Gastrocnemius medialis (tissue), 4 donors: ENCODE measurements at regions of chr1 and their contacts with region 1.

Region 1: DNA sequence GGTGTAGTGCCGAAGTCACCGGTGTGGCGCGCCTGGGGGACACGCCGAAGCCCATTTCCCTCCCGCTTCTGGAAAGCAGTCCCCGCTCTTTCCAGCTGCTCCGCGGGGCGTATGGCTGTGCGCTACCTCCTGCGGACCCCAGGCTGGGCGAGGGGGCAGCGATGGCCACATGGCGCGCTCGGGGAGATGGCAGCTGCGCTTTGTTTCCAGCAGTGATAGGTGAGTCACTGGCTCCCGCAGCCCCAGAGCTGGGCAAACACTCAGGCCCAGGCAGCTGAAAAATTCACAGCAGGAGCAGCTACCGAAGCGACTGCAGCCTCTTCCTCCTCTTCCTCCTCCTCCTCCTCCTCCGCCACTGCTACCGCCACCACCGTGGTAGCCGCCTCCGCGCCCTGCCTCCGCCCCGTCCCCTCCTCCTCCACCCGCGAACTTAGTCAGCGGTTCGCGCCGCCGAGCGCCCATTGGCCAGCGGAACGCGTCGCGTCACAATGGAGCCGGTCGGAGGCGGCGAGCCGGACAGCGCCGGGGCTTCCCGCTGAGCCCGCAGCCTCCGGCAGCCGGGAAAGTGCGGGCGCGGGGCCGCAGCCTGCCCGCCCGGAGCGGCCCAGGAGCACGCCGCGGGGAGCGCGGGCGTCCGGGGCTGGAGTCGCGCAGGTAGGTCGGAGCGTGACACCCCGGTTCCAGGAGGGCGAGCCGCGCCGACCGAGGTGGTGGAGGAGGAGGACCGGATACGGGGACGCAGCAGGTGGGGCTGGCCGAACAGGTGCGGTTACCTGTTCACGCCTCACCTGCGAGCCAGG is at the start of gene LRRC8B:
- DNase-seq: peak; percentile 87 to 88
- ATAC-seq: peak; percentile 88 to 91
- H3K4me3 ChIP-seq: peak within 1 kb of the TSS; percentile 82 to 99 (median 88)
- H3K27ac ChIP-seq: peak within 1 kb of the TSS; percentile 89 to 98 (median 94)
- H3K4me1 ChIP-seq: peaks cover 36 to 40% of the 10 kb centered on the region in 2 donors
- H3K27me3 ChIP-seq: no peaks in the 10 kb centered on the region
- CTCF ChIP-seq: no peak
- POLR2A ChIP-seq: peak; percentile 90 to 94
- total RNA-seq, gene LRRC8B: 3.5 to 15.7 (median 8.5) TPM

Region 2: DNA sequence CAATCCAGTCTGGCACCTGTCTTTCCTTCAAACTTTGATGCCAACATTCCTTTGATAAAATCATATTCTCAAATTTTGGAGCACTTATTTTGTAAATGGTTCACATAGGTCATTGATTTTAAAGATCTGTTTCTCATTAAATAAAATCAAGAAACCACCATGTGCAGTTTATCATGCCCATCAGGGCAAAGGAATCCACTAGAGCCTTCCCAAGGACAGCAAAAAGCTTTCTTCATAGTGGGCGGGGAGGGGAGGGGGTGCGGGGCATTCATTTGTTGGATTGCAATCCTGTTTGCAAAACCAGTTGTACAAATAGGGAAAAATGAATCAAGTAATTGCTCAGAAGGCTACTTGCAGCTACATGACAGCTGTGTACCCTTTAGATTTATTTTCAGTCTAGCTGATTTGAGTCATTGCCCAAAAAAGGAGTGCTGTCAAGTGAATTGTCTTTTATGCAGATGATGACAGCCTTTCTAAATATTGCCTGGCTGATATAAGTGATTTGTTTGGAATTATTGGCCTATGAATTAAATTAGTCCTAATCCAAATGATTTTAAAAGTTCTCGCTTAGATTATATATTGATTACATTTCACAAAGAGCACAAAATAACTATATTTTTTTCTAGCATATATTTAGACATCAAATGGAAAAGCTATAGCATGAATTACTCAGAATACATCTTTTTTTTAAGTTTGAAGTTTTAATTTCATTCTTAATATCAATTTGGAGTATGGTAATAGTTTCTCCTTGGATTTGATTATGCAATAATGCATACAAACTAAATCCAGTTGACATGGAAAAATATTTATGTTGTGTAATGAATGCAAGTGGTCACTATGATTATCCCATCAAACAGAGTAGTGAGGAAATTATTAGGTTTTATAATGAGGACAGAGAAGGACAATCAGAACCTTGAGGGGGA is 23.3 kb after region 1 on chr1:
- in situ Hi-C with region 1: no loop called
- intact Hi-C with region 1: loop called (anchors 2 kb)
- DNase-seq: peak; percentile 15 to 64
- ATAC-seq: peak; percentile 69 to 87
- H3K4me3 ChIP-seq: no peak overlapping the region
- H3K27ac ChIP-seq: peak overlapping the region; percentile 13 to 77 (median 70)
- H3K4me1 ChIP-seq: peaks cover 58% of the 10 kb centered on the region in 2 donors
- H3K27me3 ChIP-seq: no peaks in the 10 kb centered on the region
- CTCF ChIP-seq: no peak
- POLR2A ChIP-seq: no peak

Region 3: DNA sequence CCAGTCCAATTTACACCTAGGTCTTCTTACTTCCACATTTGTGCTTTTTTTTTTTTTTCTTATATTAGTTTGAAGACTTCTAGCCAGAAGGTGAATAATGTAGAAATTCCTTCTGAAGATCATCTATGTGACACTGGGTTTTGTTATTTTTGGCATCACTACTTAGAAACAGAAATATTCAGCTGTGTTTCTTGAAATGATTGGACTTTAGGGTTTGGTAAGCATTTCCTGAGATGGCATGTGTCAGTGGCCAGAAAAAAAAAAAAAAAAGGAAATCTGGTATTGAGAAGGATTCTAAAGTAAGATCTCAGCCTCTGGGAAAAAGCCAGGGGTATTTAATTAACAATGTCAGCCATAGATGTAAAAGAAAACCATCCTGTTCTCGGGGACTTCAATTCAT is 64.9 kb after region 1 on chr1:
- in situ Hi-C with region 1: loop called in 1 of 4 experiments (anchors 10 kb)
- intact Hi-C with region 1: no loop called
- DNase-seq: no peak
- ATAC-seq: no peak
- H3K4me3 ChIP-seq: no peak overlapping the region
- H3K27ac ChIP-seq: no peak overlapping the region
- H3K4me1 ChIP-seq: peaks cover 0 to 2% of the 10 kb centered on the region in 2 donors
- H3K27me3 ChIP-seq: no peaks in the 10 kb centered on the region
- CTCF ChIP-seq: no peak
- POLR2A ChIP-seq: no peak

Region 4: GRCh38 chr1:89598450-89599331 is 74.1 kb after region 1 on chr1:
- in situ Hi-C with region 1: no loop called
- intact Hi-C with region 1: loop called (anchors 2 kb)
- DNase-seq: no peak
- ATAC-seq: peak; percentile 77 to 84
- H3K4me3 ChIP-seq: no peak overlapping the region
- H3K27ac ChIP-seq: no peak overlapping the region
- H3K4me1 ChIP-seq: peaks cover 3 to 10% of the 10 kb centered on the region in 2 donors
- H3K27me3 ChIP-seq: no peaks in the 10 kb centered on the region
- CTCF ChIP-seq: peak; percentile 60 to 70 (median 69)
- POLR2A ChIP-seq: no peak

Region 5: GRCh38 chr1:89820422-89821321 is 296.1 kb after region 1 on chr1 and contains the start of gene LRRC8D:
- in situ Hi-C with region 1: no loop called
- intact Hi-C with region 1: no loop called
- DNase-seq: peak; percentile 79 to 86
- ATAC-seq: peak; percentile 85 to 94
- H3K4me3 ChIP-seq: peak within 1 kb of the TSS; percentile 83 to 88 (median 86)
- H3K27ac ChIP-seq: peak within 1 kb of the TSS; percentile 77 to 88 (median 78)
- H3K4me1 ChIP-seq: peaks cover 20 to 37% of the 10 kb centered on the region in 2 donors
- H3K27me3 ChIP-seq: no peaks in the 10 kb centered on the region
- CTCF ChIP-seq: peak in 2 of 5 experiments; percentile 20 to 21
- POLR2A ChIP-seq: peak; percentile 47 to 84
- total RNA-seq, gene LRRC8D: 3.0 to 15.0 (median 9.2) TPM

Region 6: DNA sequence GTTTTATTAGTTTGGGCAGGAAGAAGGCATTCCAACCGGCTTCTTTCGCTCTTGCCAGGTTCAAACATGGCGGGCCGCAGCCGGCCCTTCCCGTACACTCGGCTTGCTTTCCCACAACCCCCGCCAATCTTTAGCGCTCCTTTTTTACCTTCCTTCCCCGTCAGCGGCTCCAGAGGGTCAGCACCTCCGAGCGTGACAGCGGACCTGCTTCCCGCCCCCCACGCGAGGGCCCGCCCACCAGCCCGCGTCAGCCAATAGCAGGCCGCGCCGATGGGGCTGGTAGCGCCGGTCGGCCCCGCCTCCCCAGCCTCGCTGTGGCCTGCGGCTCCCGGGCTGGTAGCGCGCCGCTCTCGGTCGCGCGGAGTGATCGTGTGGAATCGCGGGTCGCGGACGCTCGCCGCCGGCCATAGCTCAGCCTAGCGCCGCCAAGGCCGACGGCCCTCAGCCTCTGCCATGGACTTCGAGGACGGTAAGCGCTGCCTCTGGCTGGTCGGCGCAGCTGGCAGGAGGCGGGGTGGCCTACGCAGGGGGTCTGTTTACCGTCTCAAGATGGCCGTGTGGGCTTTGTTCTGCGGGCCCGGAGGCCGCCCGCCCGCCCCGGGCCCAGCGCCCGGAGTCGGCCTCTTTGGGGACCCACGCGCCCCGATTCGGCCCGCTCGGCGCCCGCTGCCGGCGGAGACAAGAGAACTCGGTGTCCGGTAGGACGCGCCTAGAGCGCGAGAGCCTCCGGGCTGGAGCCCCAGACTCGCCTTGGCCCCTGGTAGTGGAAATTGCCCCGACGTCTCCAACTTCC is 470.4 kb after region 1 on chr1 and contains the start of gene ZNF326:
- in situ Hi-C with region 1: loop called in 1 of 4 experiments (anchors 25 kb)
- intact Hi-C with region 1: loop called (anchors 10 kb)
- DNase-seq: peak; percentile 91 to 95
- ATAC-seq: peak; percentile 91 to 92
- H3K4me3 ChIP-seq: peak within 1 kb of the TSS; percentile 72 to 94 (median 88)
- H3K27ac ChIP-seq: peak within 1 kb of the TSS; percentile 86 to 100 (median 98)
- H3K4me1 ChIP-seq: peaks cover 37 to 39% of the 10 kb centered on the region in 2 donors
- H3K27me3 ChIP-seq: no peaks in the 10 kb centered on the region
- CTCF ChIP-seq: peak in 1 of 5 experiments; percentile 13
- POLR2A ChIP-seq: peak; percentile 97 to 98
- total RNA-seq, gene ZNF326: 5.8 to 10.8 (median 9.2) TPM